B cell (primary cell): ENCODE measurements at regions of chr14 and their contacts with region 1.

Region 1: DNA sequence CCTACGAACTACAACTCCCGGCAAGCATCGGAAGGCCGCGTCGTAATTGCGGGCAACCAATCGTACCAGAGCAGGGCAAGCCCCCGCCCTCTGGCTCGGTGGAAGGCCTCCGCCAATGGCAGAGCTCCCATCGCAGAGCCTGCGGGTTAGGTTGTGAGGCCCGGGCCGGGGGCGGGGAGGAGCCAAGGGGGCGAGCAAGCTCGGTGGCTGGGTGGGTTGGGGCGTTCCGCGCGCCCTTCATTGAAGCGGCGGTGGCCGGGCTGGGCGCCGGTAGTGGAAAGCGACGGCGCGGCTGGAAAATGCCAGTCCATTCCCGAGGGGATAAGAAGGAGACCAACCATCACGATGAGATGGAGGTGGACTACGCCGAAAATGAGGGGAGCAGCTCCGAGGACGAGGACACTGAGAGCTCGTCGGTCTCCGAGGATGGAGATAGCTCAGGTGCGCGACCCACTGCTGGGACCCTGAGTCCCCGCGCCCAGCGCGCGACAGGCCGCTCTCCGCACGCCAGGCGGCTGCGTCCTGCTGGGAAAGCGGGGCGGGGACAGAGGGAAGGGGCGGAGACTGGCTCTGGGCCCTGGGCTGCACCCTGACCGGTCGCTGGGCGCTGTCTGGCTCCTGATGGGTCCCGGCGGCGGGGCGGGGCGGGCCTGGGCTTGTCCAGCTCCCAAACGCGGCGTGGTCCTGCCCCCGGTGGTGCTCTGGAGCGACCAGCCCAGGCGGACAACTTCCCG is at the start of gene BRMS1L:
- DNase-seq: peak; percentile 97
- ATAC-seq: peak; percentile 95
- H3K4me3 ChIP-seq: peak within 1 kb of the TSS; percentile 81 to 100 (median 90)
- H3K4me3 Mint-ChIP-seq: peak within 1 kb of the TSS; percentile 89
- H3K27ac ChIP-seq: peak within 1 kb of the TSS; percentile 75
- H3K27ac Mint-ChIP-seq: peak within 1 kb of the TSS; percentile 91
- H3K4me1 ChIP-seq: peaks cover 7 to 11% of the 10 kb centered on the region in 2 donors
- H3K4me1 Mint-ChIP-seq: peaks cover 25% of the 10 kb centered on the region
- H3K27me3 ChIP-seq: no peaks in the 10 kb centered on the region
- H3K27me3 Mint-ChIP-seq: no peaks in the 10 kb centered on the region
- CTCF ChIP-seq: no peak
- total RNA-seq, gene BRMS1L: 4.7 and 6.3 TPM in 2 replicates

Region 2: GRCh38 chr14:34539407-34540180 is 1286.8 kb before region 1 on chr14 and contains the start of gene EAPP:
- CTCF ChIA-PET with region 1: no interaction called
- POLR2A ChIA-PET with region 1: no interaction called
- intact Hi-C with region 1: loop called (anchors 5 kb)
- DNase-seq: peak; percentile 96
- ATAC-seq: peak; percentile 99
- H3K4me3 ChIP-seq: peak within 1 kb of the TSS; percentile 44 to 97 (median 89)
- H3K4me3 Mint-ChIP-seq: peak within 1 kb of the TSS; percentile 99
- H3K27ac ChIP-seq: peak within 1 kb of the TSS; percentile 91 to 97
- H3K27ac Mint-ChIP-seq: peak within 1 kb of the TSS; percentile 99
- H3K4me1 ChIP-seq: peaks cover 18 to 24% of the 10 kb centered on the region in 2 donors
- H3K4me1 Mint-ChIP-seq: peaks cover 21% of the 10 kb centered on the region
- H3K27me3 ChIP-seq: no peaks in the 10 kb centered on the region
- H3K27me3 Mint-ChIP-seq: no peaks in the 10 kb centered on the region
- CTCF ChIP-seq: no peak
- total RNA-seq, gene EAPP: 54.8 and 58.0 TPM in 2 replicates

Region 3: GRCh38 chr14:34982417-34983147 is 843.8 kb before region 1 on chr14 and contains the start of gene SRP54:
- CTCF ChIA-PET with region 1: interaction called, 3 read pairs
- POLR2A ChIA-PET with region 1: no interaction called
- intact Hi-C with region 1: loop called (anchors 1 kb)
- DNase-seq: peak; percentile 99
- ATAC-seq: peak; percentile 91
- H3K4me3 ChIP-seq: peak within 1 kb of the TSS; percentile 71 to 99 (median 95)
- H3K4me3 Mint-ChIP-seq: no peak within 1 kb of the TSS
- H3K27ac ChIP-seq: peak within 1 kb of the TSS; percentile 95 to 97
- H3K27ac Mint-ChIP-seq: no peak within 1 kb of the TSS
- H3K4me1 ChIP-seq: peaks cover 25 to 26% of the 10 kb centered on the region in 2 donors
- H3K4me1 Mint-ChIP-seq: peaks cover 23% of the 10 kb centered on the region
- H3K27me3 ChIP-seq: no peaks in the 10 kb centered on the region
- H3K27me3 Mint-ChIP-seq: no peaks in the 10 kb centered on the region
- CTCF ChIP-seq: no peak
- total RNA-seq, gene SRP54: 54.9 and 59.5 TPM in 2 replicates

Region 4: GRCh38 chr14:35121887-35122695 is 704.3 kb before region 1 on chr14 and contains the starts of genes PPP2R3C and PRORP:
- CTCF ChIA-PET with region 1: no interaction called
- POLR2A ChIA-PET with region 1: interaction called, 3 read pairs
- intact Hi-C with region 1: loop called (anchors 1 kb)
- DNase-seq: peak; percentile 97
- ATAC-seq: peak; percentile 89
- H3K4me3 ChIP-seq: peak within 1 kb of the TSS; percentile 70 to 97 (median 77)
- H3K4me3 Mint-ChIP-seq: peak within 1 kb of the TSS; percentile 100
- H3K27ac ChIP-seq: peak within 1 kb of the TSS; percentile 94 to 100
- H3K27ac Mint-ChIP-seq: peak within 1 kb of the TSS; percentile 99
- H3K4me1 ChIP-seq: peaks cover 19 to 24% of the 10 kb centered on the region in 2 donors
- H3K4me1 Mint-ChIP-seq: peaks cover 53% of the 10 kb centered on the region
- H3K27me3 ChIP-seq: no peaks in the 10 kb centered on the region
- H3K27me3 Mint-ChIP-seq: no peaks in the 10 kb centered on the region
- CTCF ChIP-seq: no peak
- total RNA-seq, gene PPP2R3C: 40.8 and 41.7 TPM in 2 replicates
- total RNA-seq, gene PRORP: 16.4 and 22.2 TPM in 2 replicates

Region 5: DNA sequence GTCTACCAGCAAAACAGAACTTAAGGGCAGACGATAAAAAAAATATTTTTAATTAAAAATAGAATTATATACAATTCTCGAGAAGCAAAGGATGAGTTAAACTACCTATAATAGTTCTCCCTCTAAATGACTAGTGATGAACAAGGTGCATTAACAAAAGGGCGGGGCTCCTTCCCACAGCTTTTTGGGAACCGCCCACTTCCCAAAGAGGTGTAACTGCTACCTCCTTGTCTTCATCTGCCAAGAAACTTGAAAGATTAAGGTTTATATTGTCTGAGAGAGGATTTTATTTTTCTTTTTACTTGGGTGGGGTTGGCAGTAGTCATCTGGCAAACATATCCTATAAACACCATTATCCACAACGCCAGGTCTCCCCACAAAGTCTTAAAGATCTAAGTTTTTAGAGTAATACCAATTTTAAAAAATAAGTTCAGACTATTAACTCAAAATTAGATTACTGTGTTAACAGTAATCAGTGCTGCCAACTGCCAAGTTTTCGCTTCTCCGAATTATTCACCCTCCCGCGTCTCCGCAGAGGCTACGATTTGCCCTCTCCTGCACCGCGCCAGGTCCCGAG is 18.2 kb before region 1 on chr14:
- CTCF ChIA-PET with region 1: interaction called, 12 read pairs
- POLR2A ChIA-PET with region 1: interaction called, 4 read pairs
- intact Hi-C with region 1: loop called (anchors 1 kb)
- DNase-seq: no peak
- ATAC-seq: no peak
- H3K4me3 ChIP-seq: peak overlapping the region; percentile 57 to 81 (median 70)
- H3K4me3 Mint-ChIP-seq: peak overlapping the region; percentile 98
- H3K27ac ChIP-seq: peak overlapping the region; percentile 78 to 88
- H3K27ac Mint-ChIP-seq: peak overlapping the region; percentile 95
- H3K4me1 ChIP-seq: peaks cover 12 to 14% of the 10 kb centered on the region in 2 donors
- H3K4me1 Mint-ChIP-seq: peaks cover 29% of the 10 kb centered on the region
- H3K27me3 ChIP-seq: no peaks in the 10 kb centered on the region
- H3K27me3 Mint-ChIP-seq: no peaks in the 10 kb centered on the region
- CTCF ChIP-seq: no peak

Region 6: DNA sequence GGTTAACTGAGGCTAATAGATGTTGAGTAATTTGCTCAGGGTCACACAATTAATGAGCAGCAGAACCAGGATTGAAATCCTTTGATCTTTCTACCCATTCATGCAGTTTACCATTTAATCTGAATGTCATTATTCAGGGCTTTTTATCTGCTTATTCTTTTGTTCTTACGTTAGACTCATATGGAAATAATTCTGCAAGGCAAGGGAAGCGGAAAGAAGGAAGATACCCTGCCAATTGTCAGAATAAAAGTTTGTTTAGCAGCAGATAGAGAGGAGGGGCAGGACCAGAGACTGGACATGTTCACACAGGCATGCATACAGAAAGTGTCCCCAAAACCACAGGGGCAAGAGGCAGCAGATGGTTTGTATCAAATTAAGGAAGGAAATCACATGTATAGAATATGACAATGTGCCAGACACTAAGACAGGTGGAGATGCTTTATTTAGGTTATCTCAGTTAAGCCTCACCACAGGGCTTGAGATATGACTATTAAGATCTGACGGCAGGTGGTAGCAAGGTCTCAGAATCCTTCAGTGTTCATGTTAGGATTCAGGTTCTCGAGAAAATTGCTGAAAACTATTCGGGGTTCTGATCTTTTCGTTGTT is 29.6 kb after region 1 on chr14:
- CTCF ChIA-PET with region 1: no interaction called
- POLR2A ChIA-PET with region 1: no interaction called
- intact Hi-C with region 1: no loop called
- DNase-seq: peak; percentile 41
- ATAC-seq: no peak
- H3K4me3 ChIP-seq: no peak overlapping the region
- H3K4me3 Mint-ChIP-seq: no peak overlapping the region
- H3K27ac ChIP-seq: no peak overlapping the region
- H3K27ac Mint-ChIP-seq: peak overlapping the region; percentile 1
- H3K4me1 ChIP-seq: peaks cover 10 to 11% of the 10 kb centered on the region in 2 donors
- H3K4me1 Mint-ChIP-seq: peaks cover 13% of the 10 kb centered on the region
- H3K27me3 ChIP-seq: no peaks in the 10 kb centered on the region
- H3K27me3 Mint-ChIP-seq: no peaks in the 10 kb centered on the region
- CTCF ChIP-seq: no peak

Region 7: GRCh38 chr14:36320200-36320896 is 494.0 kb after region 1 on chr14 and contains the start of gene MBIP:
- CTCF ChIA-PET with region 1: no interaction called
- POLR2A ChIA-PET with region 1: no interaction called
- intact Hi-C with region 1: loop called (anchors 5 kb)
- DNase-seq: peak; percentile 94
- ATAC-seq: peak; percentile 97
- H3K4me3 ChIP-seq: peak within 1 kb of the TSS; percentile 70 to 92 (median 84)
- H3K4me3 Mint-ChIP-seq: peak within 1 kb of the TSS; percentile 99
- H3K27ac ChIP-seq: peak within 1 kb of the TSS; percentile 30 to 75
- H3K27ac Mint-ChIP-seq: peak within 1 kb of the TSS; percentile 90
- H3K4me1 ChIP-seq: peaks cover 5% of the 10 kb centered on the region in 2 donors
- H3K4me1 Mint-ChIP-seq: peaks cover 18% of the 10 kb centered on the region
- H3K27me3 ChIP-seq: peaks cover 0 to 7% (median 0%) of the 10 kb centered on the region in 4 experiments
- H3K27me3 Mint-ChIP-seq: peaks cover 18% of the 10 kb centered on the region
- CTCF ChIP-seq: no peak
- total RNA-seq, gene MBIP: 17.3 and 20.8 TPM in 2 replicates